Activated naive CD4-positive, alpha-beta T cell treated with anti-CD3 and anti-CD28 coated beads for 36 hours (primary cell): ENCODE measurements at regions of chr16 and their contacts with region 1.

Region 1: GRCh38 chr16:35931722-35932121 is 2472.3 kb downstream of the TP53TG3F start:
- DNase-seq: no peak
- H3K4me3 Mint-ChIP-seq: no peak overlapping the region
- H3K27ac Mint-ChIP-seq: no peak overlapping the region
- H3K4me1 Mint-ChIP-seq: no peaks in the 10 kb centered on the region
- H3K27me3 Mint-ChIP-seq: no peaks in the 10 kb centered on the region

Region 2: DNA sequence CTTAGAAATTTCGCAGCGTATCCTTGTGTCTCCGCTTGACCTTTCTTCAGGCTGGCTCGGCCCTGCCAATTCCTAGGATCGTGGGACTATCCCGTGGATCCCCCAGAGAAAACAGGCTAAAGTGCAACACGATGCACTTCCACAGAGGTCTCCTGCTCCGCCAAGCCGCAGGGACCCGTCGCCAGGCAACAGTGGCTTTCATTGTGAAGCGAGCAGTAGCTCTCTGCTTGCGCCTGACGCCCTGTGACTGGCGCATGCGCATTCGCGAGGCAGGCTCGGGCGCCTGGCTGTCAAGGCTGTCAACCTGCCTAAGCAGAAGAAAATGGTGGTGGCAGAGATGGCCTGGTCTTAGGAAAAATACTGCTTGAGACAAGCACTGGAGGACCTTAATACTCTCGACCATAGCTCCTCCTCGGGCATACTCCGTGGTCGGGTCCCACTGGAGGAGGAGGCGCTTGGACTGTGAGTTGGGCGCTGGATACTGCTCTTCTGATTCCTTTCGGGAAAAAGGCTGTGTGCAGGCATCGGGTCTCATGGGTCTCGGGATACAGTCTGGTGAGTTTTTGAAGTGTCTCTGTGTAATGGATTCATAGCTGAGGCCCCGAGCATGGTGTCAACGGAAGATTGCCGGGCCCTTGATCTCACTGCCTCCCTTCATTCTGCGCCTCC is 136.2 kb before region 1 on chr16:
- CTCF ChIA-PET with region 1: no interaction called
- intact Hi-C with region 1: no loop called
- DNase-seq: no peak
- H3K4me3 Mint-ChIP-seq: no peak overlapping the region
- H3K27ac Mint-ChIP-seq: no peak overlapping the region
- H3K4me1 Mint-ChIP-seq: no peaks in the 10 kb centered on the region
- H3K27me3 Mint-ChIP-seq: no peaks in the 10 kb centered on the region

Region 3: GRCh38 chr16:35881654-35882053 is 50.1 kb before region 1 on chr16:
- CTCF ChIA-PET with region 1: no interaction called
- intact Hi-C with region 1: loop called (anchors 10 kb)
- DNase-seq: no peak
- H3K4me3 Mint-ChIP-seq: no peak overlapping the region
- H3K27ac Mint-ChIP-seq: no peak overlapping the region
- H3K4me1 Mint-ChIP-seq: no peaks in the 10 kb centered on the region
- H3K27me3 Mint-ChIP-seq: no peaks in the 10 kb centered on the region